Posterior vena cava (tissue), 2 donors: ENCODE measurements at regions of chr13 and their contacts with region 1.

Region 1: DNA sequence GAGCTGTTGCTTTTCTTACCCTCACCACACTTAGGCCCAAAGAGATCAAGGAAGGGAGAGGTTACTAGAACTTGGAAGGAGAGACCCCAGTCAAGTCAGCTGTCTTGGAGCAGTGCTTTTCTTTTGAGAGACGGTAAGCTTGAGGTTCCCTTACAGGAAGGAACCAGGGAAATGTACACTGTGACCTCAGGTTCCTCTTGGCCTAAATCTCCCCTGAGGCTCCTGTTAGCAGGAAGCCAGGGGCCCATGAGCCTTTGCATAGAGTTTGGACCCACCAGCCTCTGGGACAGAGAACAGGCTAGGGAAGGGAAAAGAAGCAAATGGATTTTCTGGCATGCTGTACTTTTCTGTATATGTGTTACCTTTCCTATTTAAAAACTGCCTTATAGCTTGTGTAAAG is 5.9 kb upstream of the GPR18 start:
- DNase-seq: no peak

Region 2: DNA sequence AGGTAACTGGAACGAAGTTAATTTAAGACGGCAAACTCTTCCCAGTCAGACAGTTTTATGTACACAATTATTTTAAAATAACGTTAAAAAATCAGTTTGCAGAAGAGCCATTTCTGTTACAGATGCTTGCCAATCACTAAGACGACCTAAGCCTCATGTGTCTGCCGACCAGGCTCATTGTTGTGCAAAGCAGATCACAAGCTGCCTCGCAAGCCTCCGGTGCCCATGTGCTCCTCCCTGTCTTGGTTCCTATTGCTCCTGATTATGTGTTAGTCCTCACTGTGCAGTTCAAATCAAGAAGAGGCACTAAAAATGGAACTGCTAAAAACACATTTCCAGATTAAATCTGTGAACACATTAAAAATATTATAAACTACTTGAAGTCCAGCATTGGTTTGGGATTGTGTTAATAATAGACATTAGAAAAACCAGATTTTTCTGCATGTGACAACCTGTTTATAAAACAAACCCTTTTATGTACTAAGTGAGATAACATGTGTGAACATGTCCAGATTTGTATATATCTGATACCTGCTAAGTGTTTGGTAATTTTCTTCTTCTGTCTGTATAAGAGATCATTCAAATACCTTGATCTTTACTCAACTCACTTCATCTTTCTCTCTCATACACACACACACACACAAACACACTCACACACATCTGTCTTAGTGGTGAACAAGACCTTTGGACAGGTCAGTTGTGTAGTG is 429.6 kb before region 1 on chr13:
- intact Hi-C with region 1: no loop called
- DNase-seq: no peak

Region 3: DNA sequence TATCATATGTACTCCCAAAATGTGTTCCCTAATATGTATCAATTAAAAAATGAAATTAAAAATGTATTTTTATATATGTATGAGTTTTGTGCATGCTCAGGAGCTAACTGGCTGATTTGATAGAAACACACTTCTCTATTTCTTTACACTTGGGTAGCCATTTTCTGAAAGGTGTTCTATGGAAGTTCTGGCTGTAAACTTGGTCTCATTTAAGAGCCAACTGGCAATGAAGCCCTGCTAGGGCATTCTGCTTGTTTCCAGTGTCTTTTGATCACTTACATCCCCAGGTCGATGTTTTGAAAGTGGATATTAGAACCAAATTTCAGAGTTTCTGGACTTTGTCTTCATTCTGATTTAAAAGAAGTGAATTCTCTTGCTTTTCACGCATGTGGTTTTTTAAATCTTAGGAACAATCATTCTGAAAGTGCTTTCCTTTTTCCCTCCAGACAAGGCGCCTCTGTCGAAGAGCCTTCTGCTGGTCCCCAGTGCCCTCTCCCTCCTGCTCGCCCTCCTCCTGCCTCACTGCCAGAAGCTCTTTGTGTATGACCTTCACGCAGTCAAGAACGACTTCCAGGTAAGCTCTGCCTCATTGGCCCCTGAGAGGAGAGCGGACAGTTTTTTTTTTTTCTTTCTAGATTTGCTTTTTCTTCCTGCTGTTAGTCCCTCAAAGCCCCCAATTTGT is 25.9 kb before region 1 on chr13:
- intact Hi-C with region 1: loop called in 1 of 2 experiments (anchors 1 kb)
- DNase-seq: no peak

Region 4: GRCh38 chr13:99250982-99251825 is 12.8 kb before region 1 on chr13:
- intact Hi-C with region 1: no loop called
- DNase-seq: no peak

Region 5: GRCh38 chr13:99774659-99775058 is 510.6 kb after region 1 on chr13:
- intact Hi-C with region 1: no loop called
- DNase-seq: no peak